ENCODE measurements at regions of chr7 and their contacts with region 1.

Region 1: GRCh38 chr7:41977151-41977651 is 259.8 kb downstream of the GLI3 start:
- DNase-seq: no peak
- H3K4me3 ChIP-seq: no peak overlapping the region
- CTCF ChIP-seq: peak; percentile 69

Region 2: DNA sequence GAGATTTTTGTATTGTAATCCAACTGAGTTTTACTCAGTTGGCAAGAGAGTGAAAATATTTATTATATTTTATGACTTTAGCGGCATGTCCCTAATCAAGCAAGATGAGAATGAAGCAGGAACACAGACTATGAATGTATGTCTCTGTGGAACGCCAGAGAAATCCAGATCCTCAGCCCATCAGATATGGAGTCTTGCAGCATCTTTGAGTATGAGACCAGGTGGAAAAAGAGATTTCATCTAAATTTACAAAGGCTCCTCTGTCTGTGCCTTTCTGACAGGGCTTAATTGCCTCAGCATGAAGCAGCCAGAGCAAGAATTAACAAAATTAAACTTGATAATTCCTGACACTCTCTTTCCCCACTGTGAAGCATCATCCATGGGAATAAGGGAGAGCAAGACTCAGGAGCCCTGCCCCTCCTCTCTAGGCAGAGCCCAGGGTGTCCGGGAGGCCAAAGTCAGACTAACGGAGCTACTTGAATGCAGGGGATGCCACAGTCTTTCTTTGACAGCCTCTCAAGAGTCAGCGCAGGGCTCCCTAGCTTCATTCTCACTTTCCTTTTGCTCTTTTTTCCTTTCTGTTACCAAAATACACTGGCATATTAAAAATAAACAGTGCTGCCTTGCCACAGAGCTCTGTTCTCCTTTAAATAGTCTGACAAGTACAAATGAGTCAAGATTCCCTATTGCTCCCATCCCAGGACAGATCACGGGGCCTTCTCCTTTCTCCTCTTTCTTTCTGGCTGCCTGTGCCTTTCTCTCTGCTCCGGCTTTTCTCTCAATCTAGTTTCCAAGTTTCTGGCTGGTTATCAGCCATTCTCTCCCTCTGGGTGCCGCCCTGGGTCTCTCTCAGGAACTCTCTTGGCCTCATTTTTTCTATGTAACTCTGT is 142.2 kb before region 1 on chr7:
- CTCF ChIA-PET with region 1: no interaction called
- POLR2A ChIA-PET with region 1: no interaction called
- DNase-seq: no peak
- H3K4me3 ChIP-seq: no peak overlapping the region
- CTCF ChIP-seq: no peak

Region 3: GRCh38 chr7:41955893-41956675 is 21.1 kb before region 1 on chr7:
- CTCF ChIA-PET with region 1: interaction called, 19 read pairs
- POLR2A ChIA-PET with region 1: no interaction called
- DNase-seq: peak; percentile 98
- H3K4me3 ChIP-seq: peak overlapping the region; percentile 36
- CTCF ChIP-seq: no peak

Region 4: GRCh38 chr7:42002654-42003053 is 25.5 kb after region 1 on chr7:
- CTCF ChIA-PET with region 1: interaction called, 34 read pairs
- POLR2A ChIA-PET with region 1: no interaction called
- DNase-seq: no peak
- H3K4me3 ChIP-seq: no peak overlapping the region
- CTCF ChIP-seq: no peak

Region 5: GRCh38 chr7:42227936-42228591 is 250.9 kb after region 1 on chr7:
- CTCF ChIA-PET with region 1: interaction called, 29 read pairs
- POLR2A ChIA-PET with region 1: no interaction called
- DNase-seq: no peak
- H3K4me3 ChIP-seq: peak overlapping the region; percentile 42
- CTCF ChIP-seq: no peak

Region 6: DNA sequence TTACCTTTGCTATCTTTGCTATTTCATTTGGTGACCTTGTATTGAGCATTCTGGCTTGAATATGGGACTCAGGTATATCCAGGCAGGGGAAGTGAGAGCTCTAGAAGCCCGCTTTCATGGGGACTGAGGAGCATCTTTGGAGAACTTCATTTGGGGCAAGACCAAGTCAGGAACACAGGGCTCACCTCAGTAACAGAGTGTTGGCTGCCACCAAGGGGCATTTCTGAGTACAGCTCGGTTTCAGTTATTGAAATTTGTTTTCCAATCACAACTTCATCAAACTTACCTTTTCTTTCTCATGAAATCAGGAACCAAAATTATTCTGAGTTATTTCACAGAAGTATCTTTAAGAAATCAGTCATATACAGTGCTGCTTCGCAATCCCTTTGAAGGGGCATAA is 597.5 kb after region 1 on chr7:
- CTCF ChIA-PET with region 1: interaction called, 35 read pairs
- POLR2A ChIA-PET with region 1: no interaction called
- DNase-seq: no peak
- H3K4me3 ChIP-seq: no peak overlapping the region
- CTCF ChIP-seq: peak; percentile 28

Region 7: DNA sequence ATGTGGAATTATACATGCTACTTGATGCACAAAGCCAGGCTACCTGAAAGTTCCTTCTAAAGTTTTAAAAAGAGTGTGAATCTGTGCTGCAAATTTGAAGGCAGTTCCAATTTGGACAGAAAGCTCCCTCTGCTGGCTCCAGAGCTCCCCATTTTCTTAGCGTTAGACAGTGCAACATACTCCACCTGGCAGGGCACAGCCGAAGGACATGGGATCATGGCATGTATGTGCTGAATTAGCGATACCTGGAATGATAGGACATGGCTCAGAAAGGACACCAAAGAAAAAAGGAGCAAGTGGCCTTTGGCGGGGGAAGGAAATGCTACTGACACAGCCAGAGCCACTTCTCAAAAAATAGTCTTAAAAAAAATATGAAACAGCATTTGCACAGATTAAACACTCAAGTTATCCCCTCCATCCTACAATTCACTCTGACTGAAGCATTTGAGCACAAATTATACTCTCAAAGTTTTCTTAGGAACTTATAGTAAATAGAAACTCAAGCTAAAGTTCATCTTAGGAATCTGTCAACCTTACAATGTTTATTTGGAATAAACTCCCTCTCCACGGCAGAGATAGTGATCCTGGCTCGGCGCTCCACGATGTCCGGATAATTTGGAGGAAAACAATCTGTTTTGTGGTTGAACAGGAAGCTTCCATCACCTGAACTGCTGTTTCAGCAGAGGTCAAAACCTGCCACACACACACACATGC is 854.7 kb after region 1 on chr7:
- CTCF ChIA-PET with region 1: interaction called, 22 read pairs
- POLR2A ChIA-PET with region 1: no interaction called
- DNase-seq: no peak
- H3K4me3 ChIP-seq: no peak overlapping the region
- CTCF ChIP-seq: peak; percentile 63